CD4-positive, alpha-beta memory T cell (primary cell): ENCODE measurements at regions of chr1 and their contacts with region 1.

Region 1: GRCh38 chr1:160768295-160768657 is 27.7 kb upstream of the LY9 start:
- DNase-seq: peak; percentile 83 to 87 (median 84)
- H3K4me3 ChIP-seq: peak overlapping the region; percentile 45 to 57
- H3K4me3 Mint-ChIP-seq: peak overlapping the region; percentile 83 to 93 (median 88)
- H3K27ac ChIP-seq: peak overlapping the region; percentile 68
- H3K27ac Mint-ChIP-seq: peak overlapping the region; percentile 93 to 99 (median 97)
- H3K4me1 ChIP-seq: peaks cover 18% of the 10 kb centered on the region
- H3K4me1 Mint-ChIP-seq: peaks cover 16 to 24% (median 19%) of the 10 kb centered on the region in 4 donors
- H3K27me3 ChIP-seq: no peaks in the 10 kb centered on the region
- H3K27me3 Mint-ChIP-seq: no peaks in the 10 kb centered on the region

Region 2: DNA sequence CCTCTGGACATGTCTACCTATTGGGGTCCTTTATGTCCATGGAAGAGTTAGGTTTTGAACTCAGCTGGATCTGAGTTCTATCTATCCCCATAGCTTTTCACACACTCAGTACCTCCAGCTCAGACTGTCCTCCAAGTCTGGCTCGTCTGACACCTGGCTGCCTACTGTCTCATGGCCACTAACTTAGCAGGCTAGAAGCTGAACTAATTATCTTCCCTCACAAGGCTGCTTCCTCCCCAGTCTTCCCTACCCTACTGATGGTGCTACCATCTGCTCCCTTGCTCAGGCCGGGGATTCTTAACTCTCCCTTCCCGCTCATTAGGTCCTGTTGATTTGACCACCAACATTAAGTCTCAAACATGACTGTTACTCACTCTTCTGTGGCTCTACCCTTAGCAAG is 354.6 kb before region 1 on chr1:
- CTCF ChIA-PET with region 1: no interaction called
- POLR2A ChIA-PET with region 1: no interaction called
- intact Hi-C with region 1: no loop called
- DNase-seq: no peak
- H3K4me3 ChIP-seq: no peak overlapping the region
- H3K4me3 Mint-ChIP-seq: no peak overlapping the region
- H3K27ac ChIP-seq: no peak overlapping the region
- H3K27ac Mint-ChIP-seq: no peak overlapping the region
- H3K4me1 ChIP-seq: no peaks in the 10 kb centered on the region
- H3K4me1 Mint-ChIP-seq: no peaks in the 10 kb centered on the region
- H3K27me3 ChIP-seq: no peaks in the 10 kb centered on the region
- H3K27me3 Mint-ChIP-seq: peaks cover 0 to 4% of the 10 kb centered on the region in 2 donors

Region 3: DNA sequence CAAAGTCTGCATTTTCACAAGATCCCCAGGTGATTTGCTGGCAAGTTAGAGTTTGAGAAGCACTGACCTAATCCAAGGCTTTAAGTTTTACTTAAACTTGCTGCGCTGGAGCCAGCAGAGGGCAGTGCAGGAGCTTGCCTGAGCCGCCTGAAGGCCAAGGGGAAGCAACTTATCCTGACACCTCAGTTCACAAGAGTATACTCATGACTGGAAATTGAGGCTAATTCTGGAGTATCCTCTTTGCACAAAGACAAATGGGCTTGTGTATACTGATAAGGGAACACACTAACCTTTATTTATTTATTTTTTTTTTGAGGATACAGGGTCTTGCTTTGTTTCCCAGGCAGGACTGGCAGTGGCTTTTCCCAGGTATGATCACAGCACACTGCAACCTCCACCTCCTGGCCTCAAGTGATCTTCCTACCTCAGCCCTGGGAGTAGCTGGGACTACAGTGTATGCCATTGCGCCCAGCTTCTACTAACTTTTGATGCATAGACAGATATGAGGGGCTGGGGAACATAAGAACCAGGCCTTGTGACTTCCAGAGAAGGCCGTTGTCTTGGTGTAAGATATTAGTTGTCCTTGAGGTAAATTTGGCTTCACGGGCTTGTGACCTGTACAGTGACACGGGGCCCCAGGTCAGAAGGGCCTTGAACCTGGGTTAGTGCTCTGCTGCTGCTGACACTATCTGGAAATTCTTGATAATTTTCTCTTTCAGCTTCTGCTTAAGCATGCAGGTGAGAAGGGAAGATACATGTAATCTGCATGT is 92.5 kb before region 1 on chr1:
- CTCF ChIA-PET with region 1: interaction called, 310 read pairs
- POLR2A ChIA-PET with region 1: interaction called, 39 read pairs
- intact Hi-C with region 1: loop called (anchors 1 kb)
- DNase-seq: peak; percentile 65 to 80 (median 68)
- H3K4me3 ChIP-seq: no peak overlapping the region
- H3K4me3 Mint-ChIP-seq: peak overlapping the region in 3 of 8 donors; percentile 18 to 64 (median 60)
- H3K27ac ChIP-seq: peak overlapping the region; percentile 47
- H3K27ac Mint-ChIP-seq: peak overlapping the region in 4 of 7 donors; percentile 30 to 94 (median 85)
- H3K4me1 ChIP-seq: peaks cover 49% of the 10 kb centered on the region
- H3K4me1 Mint-ChIP-seq: peaks cover 5 to 22% (median 19%) of the 10 kb centered on the region in 4 donors
- H3K27me3 ChIP-seq: no peaks in the 10 kb centered on the region
- H3K27me3 Mint-ChIP-seq: no peaks in the 10 kb centered on the region

Region 4: DNA sequence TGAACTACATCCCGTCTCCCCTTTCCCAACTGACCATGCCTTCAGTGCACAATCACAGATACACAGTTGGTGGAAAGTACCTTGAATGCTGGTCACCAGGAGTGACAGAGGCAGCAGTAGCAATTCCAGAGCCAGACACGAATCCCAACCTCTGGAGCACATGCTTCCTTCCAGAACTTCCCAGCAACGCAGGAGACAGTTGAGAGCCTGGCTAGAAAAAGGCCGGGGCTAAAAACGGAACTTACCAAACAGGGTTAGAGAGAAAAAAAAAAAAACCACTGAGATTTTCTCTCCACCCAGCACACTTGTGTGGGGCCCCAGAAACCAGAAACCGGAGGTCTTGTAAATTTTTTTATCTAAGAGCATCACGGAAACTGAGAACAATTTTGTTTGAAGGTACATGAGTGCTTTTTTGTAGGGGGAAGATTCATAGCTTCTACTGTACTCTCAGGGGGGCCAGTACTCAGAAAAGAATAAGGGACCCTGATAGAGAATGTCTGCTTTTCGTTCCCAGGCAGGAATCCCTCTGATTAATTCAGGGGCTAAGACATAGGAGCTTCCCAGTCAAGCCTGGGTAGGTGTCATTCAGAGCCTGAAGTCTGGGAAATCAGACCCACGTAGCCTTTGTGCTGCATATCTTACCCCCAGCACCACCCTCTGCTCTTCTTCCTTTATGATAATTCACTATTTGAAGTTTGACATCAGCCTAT is 56.5 kb before region 1 on chr1 and contains the start of gene CD48:
- CTCF ChIA-PET with region 1: interaction called, 33 read pairs
- POLR2A ChIA-PET with region 1: interaction called, 16 read pairs
- intact Hi-C with region 1: loop called (anchors 1 kb)
- DNase-seq: peak; percentile 67 to 80 (median 78)
- H3K4me3 ChIP-seq: peak within 1 kb of the TSS; percentile 88 to 96
- H3K4me3 Mint-ChIP-seq: no peak within 1 kb of the TSS
- H3K27ac ChIP-seq: peak within 1 kb of the TSS; percentile 96
- H3K27ac Mint-ChIP-seq: peak within 1 kb of the TSS in 1 of 7 donors; percentile 95
- H3K4me1 ChIP-seq: peaks cover 62% of the 10 kb centered on the region
- H3K4me1 Mint-ChIP-seq: peaks cover 17 to 31% (median 29%) of the 10 kb centered on the region in 4 donors
- H3K27me3 ChIP-seq: no peaks in the 10 kb centered on the region
- H3K27me3 Mint-ChIP-seq: no peaks in the 10 kb centered on the region
- total RNA-seq, gene CD48: 301 to 329 TPM

Region 5: DNA sequence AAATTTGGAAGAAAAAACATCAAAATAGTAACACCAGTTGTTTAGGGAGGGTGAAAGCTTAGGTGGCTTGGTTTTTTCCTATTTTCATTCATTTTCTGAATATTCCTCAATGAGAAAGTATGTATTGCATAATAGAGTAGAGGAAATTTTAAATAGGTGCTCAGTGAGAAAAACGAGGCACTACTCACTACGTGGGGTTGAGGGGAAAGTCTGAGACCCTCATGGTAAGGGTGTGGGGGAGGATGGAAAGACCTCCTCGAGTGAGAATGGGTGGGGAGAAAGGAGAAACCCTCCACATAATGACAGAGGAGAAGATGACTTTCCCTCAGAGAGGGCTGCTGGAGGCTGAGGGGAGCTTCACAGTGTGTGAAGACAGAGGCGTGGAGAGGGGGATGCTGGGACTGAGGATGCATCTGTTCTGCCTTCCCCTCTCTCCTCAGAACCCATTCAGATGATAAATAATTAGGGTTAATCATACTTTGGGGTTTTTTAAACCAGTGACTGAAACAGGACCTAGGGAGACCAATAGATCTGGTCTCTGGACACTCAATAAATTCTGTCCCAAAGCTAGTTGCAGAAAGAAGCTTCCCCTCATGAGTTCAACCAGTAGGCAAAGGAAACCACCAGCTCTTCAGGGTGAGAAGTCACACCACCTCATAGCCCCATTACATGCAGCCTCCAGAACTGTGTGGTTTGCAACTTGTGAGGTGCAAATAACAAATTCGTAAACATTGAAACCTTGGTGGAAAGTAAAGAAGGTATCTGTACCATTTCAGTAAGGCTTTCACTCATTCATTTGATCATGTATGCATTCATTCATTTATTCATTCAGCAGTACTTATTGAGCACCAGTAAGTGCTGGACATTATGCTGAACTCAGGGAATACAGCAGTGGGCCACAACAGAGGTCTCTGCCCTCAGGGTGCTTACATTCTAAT is 12.1 kb before region 1 on chr1:
- CTCF ChIA-PET with region 1: interaction called, 13 read pairs
- POLR2A ChIA-PET with region 1: interaction called, 3 read pairs
- intact Hi-C with region 1: no loop called
- DNase-seq: peak in 3 of 5 donors; percentile 25 to 48 (median 31)
- H3K4me3 ChIP-seq: no peak overlapping the region
- H3K4me3 Mint-ChIP-seq: peak overlapping the region in 4 of 8 donors; percentile 2 to 63 (median 32)
- H3K27ac ChIP-seq: no peak overlapping the region
- H3K27ac Mint-ChIP-seq: peak overlapping the region in 5 of 7 donors; percentile 7 to 85 (median 52)
- H3K4me1 ChIP-seq: peaks cover 16% of the 10 kb centered on the region
- H3K4me1 Mint-ChIP-seq: peaks cover 6 to 32% (median 15%) of the 10 kb centered on the region in 4 donors
- H3K27me3 ChIP-seq: no peaks in the 10 kb centered on the region
- H3K27me3 Mint-ChIP-seq: peaks cover 0 to 2% of the 10 kb centered on the region in 2 donors

Region 6: DNA sequence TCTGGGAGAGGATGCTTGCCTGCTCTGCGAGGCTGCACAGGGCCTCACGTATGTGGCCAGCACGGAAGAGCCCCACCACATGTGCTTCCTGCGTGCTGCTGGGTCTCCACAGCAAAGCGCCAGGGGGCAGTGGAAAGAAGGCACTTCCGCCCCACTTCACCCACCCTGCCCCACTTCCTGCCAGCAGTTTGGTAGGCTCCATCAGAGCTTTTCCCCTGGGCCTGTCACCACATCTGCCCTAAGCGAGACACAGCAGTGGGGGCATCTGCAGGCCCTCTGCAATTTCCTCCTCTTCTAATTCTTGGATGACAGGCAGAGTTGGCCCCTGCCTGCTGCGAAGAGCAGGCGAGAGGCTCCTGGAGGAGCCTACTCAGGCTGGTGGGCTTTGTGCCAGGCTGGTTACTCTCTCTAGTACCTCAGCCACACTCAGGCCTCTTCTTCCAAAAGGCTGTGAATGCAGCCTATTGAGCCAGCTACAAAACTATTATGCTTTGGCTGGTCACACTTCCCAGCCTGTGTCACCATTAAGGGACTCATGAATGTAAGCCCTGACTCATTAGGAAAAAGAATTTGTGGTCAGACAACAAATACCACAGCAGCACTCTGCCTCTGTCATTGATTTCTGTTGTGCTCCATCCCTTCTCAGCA is 69.4 kb after region 1 on chr1:
- CTCF ChIA-PET with region 1: interaction called, 42 read pairs
- POLR2A ChIA-PET with region 1: interaction called, 4 read pairs
- intact Hi-C with region 1: no loop called
- DNase-seq: peak; percentile 88 to 91 (median 89)
- H3K4me3 ChIP-seq: no peak overlapping the region
- H3K4me3 Mint-ChIP-seq: peak overlapping the region in 7 of 8 donors; percentile 52 to 88 (median 71)
- H3K27ac ChIP-seq: peak overlapping the region; percentile 60
- H3K27ac Mint-ChIP-seq: peak overlapping the region; percentile 92 to 99 (median 94)
- H3K4me1 ChIP-seq: peaks cover 48% of the 10 kb centered on the region
- H3K4me1 Mint-ChIP-seq: peaks cover 46 to 69% (median 58%) of the 10 kb centered on the region in 4 donors
- H3K27me3 ChIP-seq: no peaks in the 10 kb centered on the region
- H3K27me3 Mint-ChIP-seq: peaks cover 0 to under 1% of the 10 kb centered on the region in 2 donors

Region 7: GRCh38 chr1:160884579-160884978 is 116.3 kb after region 1 on chr1:
- CTCF ChIA-PET with region 1: no interaction called
- POLR2A ChIA-PET with region 1: no interaction called
- intact Hi-C with region 1: no loop called
- DNase-seq: peak in 1 of 5 donors; percentile 39
- H3K4me3 ChIP-seq: no peak overlapping the region
- H3K4me3 Mint-ChIP-seq: no peak overlapping the region
- H3K27ac ChIP-seq: no peak overlapping the region
- H3K27ac Mint-ChIP-seq: no peak overlapping the region
- H3K4me1 ChIP-seq: no peaks in the 10 kb centered on the region
- H3K4me1 Mint-ChIP-seq: peaks cover 0 to 1% (median 0%) of the 10 kb centered on the region in 4 donors
- H3K27me3 ChIP-seq: no peaks in the 10 kb centered on the region
- H3K27me3 Mint-ChIP-seq: peaks cover under 1 to 1% of the 10 kb centered on the region in 2 donors